B cell (primary cell): ENCODE measurements at regions of chr10 and their contacts with region 1.

Region 1: DNA sequence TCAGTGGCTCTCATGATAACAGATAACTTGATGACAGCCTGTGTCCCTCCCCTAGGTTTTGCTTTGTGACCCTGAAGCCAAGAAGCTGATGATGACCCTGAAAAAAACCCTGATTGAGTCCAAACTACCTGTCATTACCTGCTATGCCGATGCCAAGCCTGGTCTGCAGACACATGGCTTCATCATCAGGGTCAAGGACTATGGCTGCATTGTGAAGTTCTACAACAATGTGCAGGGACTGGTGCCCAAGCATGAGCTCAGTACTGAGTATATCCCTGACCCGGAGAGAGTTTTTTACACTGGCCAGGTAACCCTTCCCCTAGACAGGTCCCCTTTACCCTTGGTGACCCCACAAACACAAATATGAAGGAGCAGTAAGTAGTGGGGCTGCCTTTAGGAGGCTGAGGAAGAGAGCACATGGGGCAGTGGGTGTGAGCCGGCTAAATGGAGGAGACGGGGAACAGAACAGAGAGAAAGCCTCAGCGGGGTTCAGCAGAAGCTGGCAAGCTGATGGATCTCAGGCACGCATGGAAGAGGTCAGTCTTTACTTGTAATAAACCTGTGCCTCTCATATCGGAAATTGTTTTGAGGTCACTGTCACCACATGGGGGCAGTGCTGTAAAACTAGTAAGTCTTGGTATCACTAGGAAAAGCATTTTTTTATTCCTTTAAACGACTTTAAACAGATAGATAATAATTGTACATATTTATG is 20.2 kb downstream of the PDCD11 start:
- DNase-seq: peak; percentile 76
- ATAC-seq: peak; percentile 53
- H3K4me3 ChIP-seq: no peak overlapping the region
- H3K4me3 Mint-ChIP-seq: no peak overlapping the region
- H3K27ac ChIP-seq: no peak overlapping the region
- H3K27ac Mint-ChIP-seq: no peak overlapping the region
- H3K4me1 ChIP-seq: no peaks in the 10 kb centered on the region
- H3K4me1 Mint-ChIP-seq: no peaks in the 10 kb centered on the region
- H3K27me3 ChIP-seq: no peaks in the 10 kb centered on the region
- H3K27me3 Mint-ChIP-seq: no peaks in the 10 kb centered on the region
- CTCF ChIP-seq: peak; percentile 84

Region 2: GRCh38 chr10:103215601-103216000 is 201.0 kb before region 1 on chr10:
- CTCF ChIA-PET with region 1: no interaction called
- POLR2A ChIA-PET with region 1: no interaction called
- intact Hi-C with region 1: no loop called
- DNase-seq: no peak
- ATAC-seq: no peak
- H3K4me3 ChIP-seq: no peak overlapping the region
- H3K4me3 Mint-ChIP-seq: no peak overlapping the region
- H3K27ac ChIP-seq: no peak overlapping the region
- H3K27ac Mint-ChIP-seq: no peak overlapping the region
- H3K4me1 ChIP-seq: no peaks in the 10 kb centered on the region
- H3K4me1 Mint-ChIP-seq: no peaks in the 10 kb centered on the region
- H3K27me3 ChIP-seq: no peaks in the 10 kb centered on the region
- H3K27me3 Mint-ChIP-seq: peaks cover 3% of the 10 kb centered on the region
- CTCF ChIP-seq: no peak

Region 3: DNA sequence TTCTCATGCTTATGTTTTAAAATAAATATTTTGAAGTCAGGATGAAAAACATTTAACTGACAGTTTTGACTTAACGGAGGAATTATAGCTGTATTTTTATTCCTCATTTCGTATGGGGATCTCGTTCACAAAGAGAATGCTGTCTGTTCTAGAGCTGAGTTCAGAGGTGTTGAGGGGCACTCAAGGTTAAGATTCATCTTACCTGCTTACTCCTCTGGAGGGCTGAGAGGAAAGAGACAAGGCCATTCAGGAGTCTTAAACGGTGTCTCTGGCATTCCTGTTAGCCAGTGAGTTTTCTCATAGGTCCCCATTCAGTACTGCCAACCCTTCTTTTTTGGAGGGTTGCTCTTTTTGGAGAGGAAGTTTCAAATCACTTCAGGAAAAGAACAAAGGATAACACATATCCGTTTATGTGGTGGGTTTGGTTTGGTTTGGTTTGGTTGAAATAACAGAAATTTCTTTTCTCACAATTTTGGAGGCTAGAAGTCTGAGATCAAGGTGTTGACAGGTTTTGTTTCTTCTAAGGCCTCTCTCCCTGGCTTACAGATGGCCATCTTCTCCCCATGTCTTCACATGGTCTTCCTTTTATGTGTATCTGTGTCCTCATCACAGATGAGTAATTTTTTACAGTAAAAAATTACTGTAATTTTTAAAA is 12.5 kb after region 1 on chr10:
- CTCF ChIA-PET with region 1: interaction called, 12 read pairs
- POLR2A ChIA-PET with region 1: interaction called, 3 read pairs
- intact Hi-C with region 1: no loop called
- DNase-seq: no peak
- ATAC-seq: no peak
- H3K4me3 ChIP-seq: no peak overlapping the region
- H3K4me3 Mint-ChIP-seq: no peak overlapping the region
- H3K27ac ChIP-seq: peak overlapping the region in 1 of 2 donors; percentile 28
- H3K27ac Mint-ChIP-seq: no peak overlapping the region
- H3K4me1 ChIP-seq: no peaks in the 10 kb centered on the region
- H3K4me1 Mint-ChIP-seq: no peaks in the 10 kb centered on the region
- H3K27me3 ChIP-seq: no peaks in the 10 kb centered on the region
- H3K27me3 Mint-ChIP-seq: no peaks in the 10 kb centered on the region
- CTCF ChIP-seq: no peak

Region 4: GRCh38 chr10:103451831-103452505 is 35.4 kb after region 1 on chr10 and contains the start of gene CALHM2:
- CTCF ChIA-PET with region 1: interaction called, 50 read pairs
- POLR2A ChIA-PET with region 1: interaction called, 3 read pairs
- intact Hi-C with region 1: no loop called
- DNase-seq: peak; percentile 65
- ATAC-seq: peak; percentile 86
- H3K4me3 ChIP-seq: peak within 1 kb of the TSS; percentile 22 to 91 (median 64)
- H3K4me3 Mint-ChIP-seq: peak within 1 kb of the TSS; percentile 93
- H3K27ac ChIP-seq: peak within 1 kb of the TSS; percentile 24 to 71
- H3K27ac Mint-ChIP-seq: peak within 1 kb of the TSS; percentile 91
- H3K4me1 ChIP-seq: peaks cover 20 to 39% of the 10 kb centered on the region in 2 donors
- H3K4me1 Mint-ChIP-seq: peaks cover 42% of the 10 kb centered on the region
- H3K27me3 ChIP-seq: peaks cover 0 to 6% (median 0%) of the 10 kb centered on the region in 4 experiments
- H3K27me3 Mint-ChIP-seq: no peaks in the 10 kb centered on the region
- CTCF ChIP-seq: no peak
- total RNA-seq, gene CALHM2: 42.8 and 46.2 TPM in 2 replicates

Region 5: DNA sequence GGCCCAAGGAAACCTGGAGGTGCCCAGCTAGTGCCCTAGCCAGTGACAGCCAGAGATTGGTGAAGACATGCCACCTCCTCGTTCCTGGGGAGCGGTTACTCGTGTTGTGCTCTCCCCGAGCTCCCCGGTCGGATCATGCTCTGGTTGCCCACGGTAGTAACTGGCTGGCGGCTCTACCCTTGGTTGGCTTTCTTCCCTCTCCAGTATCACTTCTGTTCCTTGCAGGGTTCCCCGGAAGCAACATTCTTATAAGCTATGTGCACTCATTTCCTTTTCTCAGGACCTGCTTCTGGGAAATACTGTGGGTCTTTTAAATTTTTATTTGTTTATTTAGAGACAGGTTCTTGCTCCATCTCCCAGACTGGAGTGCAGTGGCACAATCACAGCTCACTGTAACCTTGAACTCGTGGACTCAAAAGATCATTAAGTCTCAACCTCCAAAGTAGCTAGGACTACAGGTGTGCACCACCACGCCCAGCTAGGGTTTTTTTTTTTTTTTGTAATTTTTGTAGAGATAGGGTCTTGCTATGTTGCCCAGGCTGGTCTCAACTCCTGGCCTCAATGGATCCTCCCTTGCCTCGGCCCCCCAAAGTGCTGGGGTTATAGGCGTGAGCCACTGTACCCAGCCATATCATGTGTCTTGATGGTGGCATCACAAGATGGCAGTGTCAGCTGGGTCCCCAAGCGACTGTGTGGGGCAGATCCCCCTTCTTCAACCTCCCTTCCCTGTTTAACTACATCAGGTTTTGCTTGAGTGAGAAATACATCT is 49.0 kb after region 1 on chr10:
- CTCF ChIA-PET with region 1: interaction called, 17 read pairs
- POLR2A ChIA-PET with region 1: no interaction called
- intact Hi-C with region 1: no loop called
- DNase-seq: no peak
- ATAC-seq: no peak
- H3K4me3 ChIP-seq: no peak overlapping the region
- H3K4me3 Mint-ChIP-seq: no peak overlapping the region
- H3K27ac ChIP-seq: no peak overlapping the region
- H3K27ac Mint-ChIP-seq: peak overlapping the region; percentile 61
- H3K4me1 ChIP-seq: peaks cover 14 to 45% of the 10 kb centered on the region in 2 donors
- H3K4me1 Mint-ChIP-seq: peaks cover 43% of the 10 kb centered on the region
- H3K27me3 ChIP-seq: no peaks in the 10 kb centered on the region
- H3K27me3 Mint-ChIP-seq: no peaks in the 10 kb centered on the region
- CTCF ChIP-seq: no peak

Region 6: GRCh38 chr10:103470761-103471653 is 54.4 kb after region 1 on chr10:
- CTCF ChIA-PET with region 1: interaction called, 138 read pairs
- POLR2A ChIA-PET with region 1: no interaction called
- intact Hi-C with region 1: no loop called
- DNase-seq: peak; percentile 85
- ATAC-seq: peak; percentile 78
- H3K4me3 ChIP-seq: peak overlapping the region in 3 of 5 experiments; percentile 15 to 35 (median 31)
- H3K4me3 Mint-ChIP-seq: peak overlapping the region; percentile 79
- H3K27ac ChIP-seq: peak overlapping the region; percentile 69 to 78
- H3K27ac Mint-ChIP-seq: peak overlapping the region; percentile 96
- H3K4me1 ChIP-seq: peaks cover 40 to 70% of the 10 kb centered on the region in 2 donors
- H3K4me1 Mint-ChIP-seq: peaks cover 71% of the 10 kb centered on the region
- H3K27me3 ChIP-seq: no peaks in the 10 kb centered on the region
- H3K27me3 Mint-ChIP-seq: no peaks in the 10 kb centered on the region
- CTCF ChIP-seq: no peak

Region 7: GRCh38 chr10:103592186-103593021 is 175.8 kb after region 1 on chr10:
- CTCF ChIA-PET with region 1: interaction called, 10 read pairs
- POLR2A ChIA-PET with region 1: no interaction called
- intact Hi-C with region 1: loop called (anchors 2 kb)
- DNase-seq: peak; percentile 57
- ATAC-seq: peak; percentile 77
- H3K4me3 ChIP-seq: no peak overlapping the region
- H3K4me3 Mint-ChIP-seq: no peak overlapping the region
- H3K27ac ChIP-seq: no peak overlapping the region
- H3K27ac Mint-ChIP-seq: no peak overlapping the region
- H3K4me1 ChIP-seq: no peaks in the 10 kb centered on the region
- H3K4me1 Mint-ChIP-seq: no peaks in the 10 kb centered on the region
- H3K27me3 ChIP-seq: no peaks in the 10 kb centered on the region
- H3K27me3 Mint-ChIP-seq: no peaks in the 10 kb centered on the region
- CTCF ChIP-seq: peak; percentile 73